ENCODE measurements at regions of chr2 and their contacts with region 1.

Region 1: GRCh38 chr2:8872821-8873432 is 35.5 kb upstream of the KIDINS220 start:
- DNase-seq: peak; percentile 55
- H3K4me3 ChIP-seq: no peak overlapping the region
- H3K27ac ChIP-seq: no peak overlapping the region
- H3K4me1 ChIP-seq: peaks cover 11% of the 10 kb centered on the region
- CTCF ChIP-seq: peak; percentile 92

Region 2: DNA sequence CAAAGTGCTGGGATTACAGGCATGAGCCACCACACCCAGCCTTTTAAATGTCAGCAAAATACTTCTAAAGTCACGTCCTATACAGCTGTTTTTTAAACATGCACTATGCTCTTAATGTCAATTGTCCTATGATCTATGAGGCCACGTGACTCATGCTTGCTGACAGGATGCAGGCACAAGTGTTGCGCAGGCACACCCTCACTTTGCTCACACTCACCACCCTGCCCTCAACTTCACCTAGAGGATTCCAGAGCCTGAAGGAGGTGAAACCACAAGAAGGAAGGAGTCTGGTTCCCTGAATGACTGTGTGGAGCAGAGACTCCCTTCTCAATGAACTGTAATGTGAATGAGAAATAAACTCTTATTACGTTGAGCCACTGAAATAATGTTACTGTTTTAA is 33.3 kb after region 1 on chr2:
- CTCF ChIA-PET with region 1: no interaction called
- POLR2A ChIA-PET with region 1: no interaction called
- intact Hi-C with region 1: loop called (anchors 1 kb)
- DNase-seq: no peak
- H3K4me3 ChIP-seq: no peak overlapping the region
- H3K27ac ChIP-seq: no peak overlapping the region
- H3K4me1 ChIP-seq: no peaks in the 10 kb centered on the region
- CTCF ChIP-seq: no peak

Region 3: GRCh38 chr2:8927510-8928455 is 54.9 kb after region 1 on chr2:
- CTCF ChIA-PET with region 1: no interaction called
- POLR2A ChIA-PET with region 1: no interaction called
- intact Hi-C with region 1: no loop called
- DNase-seq: no peak
- H3K4me3 ChIP-seq: no peak overlapping the region
- H3K27ac ChIP-seq: no peak overlapping the region
- H3K4me1 ChIP-seq: no peaks in the 10 kb centered on the region
- CTCF ChIP-seq: no peak

Region 4: DNA sequence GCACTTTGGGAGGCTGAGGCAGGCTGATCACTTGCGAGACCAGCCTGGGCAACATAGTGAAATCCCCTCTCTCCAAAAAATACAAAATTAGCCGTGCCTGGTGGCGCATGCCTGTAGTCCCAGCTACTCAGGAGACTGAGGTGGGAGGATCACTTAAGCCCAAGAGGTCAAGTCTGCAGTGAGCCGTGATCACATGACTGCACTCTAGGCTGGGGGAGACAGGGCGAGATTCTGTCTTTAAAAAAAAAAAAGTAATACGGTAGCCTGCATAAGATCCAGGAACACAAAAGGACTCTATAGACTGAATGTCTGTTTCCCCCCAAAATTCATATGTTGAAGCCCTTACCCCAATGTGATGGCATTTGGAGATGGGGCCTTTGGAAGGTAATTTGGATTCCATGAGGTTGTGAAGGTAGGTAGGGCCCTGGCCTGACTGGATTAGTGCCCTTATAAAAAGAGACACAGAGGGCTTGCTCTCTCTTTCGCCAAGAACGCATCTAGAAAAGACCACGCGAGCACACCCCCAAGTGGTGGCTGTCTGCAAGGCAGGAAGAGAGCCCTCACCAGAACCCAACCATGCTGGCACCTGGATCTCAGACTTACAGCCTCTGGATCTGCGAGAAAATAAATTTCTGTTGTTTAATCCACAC is 113.5 kb after region 1 on chr2:
- CTCF ChIA-PET with region 1: no interaction called
- POLR2A ChIA-PET with region 1: no interaction called
- intact Hi-C with region 1: loop called (anchors 5 kb)
- DNase-seq: peak; percentile 50
- H3K4me3 ChIP-seq: no peak overlapping the region
- H3K27ac ChIP-seq: no peak overlapping the region
- H3K4me1 ChIP-seq: no peaks in the 10 kb centered on the region
- CTCF ChIP-seq: peak; percentile 81

Region 5: GRCh38 chr2:9149726-9150567 is 277.0 kb after region 1 on chr2:
- CTCF ChIA-PET with region 1: no interaction called
- POLR2A ChIA-PET with region 1: no interaction called
- intact Hi-C with region 1: no loop called
- DNase-seq: no peak
- H3K4me3 ChIP-seq: no peak overlapping the region
- H3K27ac ChIP-seq: no peak overlapping the region
- H3K4me1 ChIP-seq: no peaks in the 10 kb centered on the region
- CTCF ChIP-seq: no peak